Activated CD4-positive, alpha-beta memory T cell treated with anti-CD3 and anti-CD28 coated beads, Interleukin-2, amount 10 ng/mL, durations not matched to agents 7 days and 5 days (primary cell): ENCODE measurements at regions of chr16 and their contacts with region 1.

Region 1: GRCh38 chr16:84555418-84556195 is 51.1 kb upstream of the MEAK7 start:
- DNase-seq: no peak
- H3K4me3 Mint-ChIP-seq: no peak overlapping the region
- H3K27ac Mint-ChIP-seq: peak overlapping the region; percentile 41
- H3K4me1 Mint-ChIP-seq: peaks cover 43% of the 10 kb centered on the region
- H3K27me3 Mint-ChIP-seq: no peaks in the 10 kb centered on the region

Region 2: GRCh38 chr16:84423416-84423837 is 132.2 kb before region 1 on chr16:
- CTCF ChIA-PET with region 1: no interaction called
- POLR2A ChIA-PET with region 1: no interaction called
- DNase-seq: no peak
- H3K4me3 Mint-ChIP-seq: no peak overlapping the region
- H3K27ac Mint-ChIP-seq: no peak overlapping the region
- H3K4me1 Mint-ChIP-seq: peaks cover 9% of the 10 kb centered on the region
- H3K27me3 Mint-ChIP-seq: peaks cover 1% of the 10 kb centered on the region

Region 3: GRCh38 chr16:84511180-84511824 is 44.3 kb before region 1 on chr16:
- CTCF ChIA-PET with region 1: interaction called, 23 read pairs
- POLR2A ChIA-PET with region 1: interaction called, 49 read pairs
- DNase-seq: peak; percentile 79
- H3K4me3 Mint-ChIP-seq: no peak overlapping the region
- H3K27ac Mint-ChIP-seq: peak overlapping the region; percentile 99
- H3K4me1 Mint-ChIP-seq: peaks cover 81% of the 10 kb centered on the region
- H3K27me3 Mint-ChIP-seq: peaks cover 2% of the 10 kb centered on the region

Region 4: DNA sequence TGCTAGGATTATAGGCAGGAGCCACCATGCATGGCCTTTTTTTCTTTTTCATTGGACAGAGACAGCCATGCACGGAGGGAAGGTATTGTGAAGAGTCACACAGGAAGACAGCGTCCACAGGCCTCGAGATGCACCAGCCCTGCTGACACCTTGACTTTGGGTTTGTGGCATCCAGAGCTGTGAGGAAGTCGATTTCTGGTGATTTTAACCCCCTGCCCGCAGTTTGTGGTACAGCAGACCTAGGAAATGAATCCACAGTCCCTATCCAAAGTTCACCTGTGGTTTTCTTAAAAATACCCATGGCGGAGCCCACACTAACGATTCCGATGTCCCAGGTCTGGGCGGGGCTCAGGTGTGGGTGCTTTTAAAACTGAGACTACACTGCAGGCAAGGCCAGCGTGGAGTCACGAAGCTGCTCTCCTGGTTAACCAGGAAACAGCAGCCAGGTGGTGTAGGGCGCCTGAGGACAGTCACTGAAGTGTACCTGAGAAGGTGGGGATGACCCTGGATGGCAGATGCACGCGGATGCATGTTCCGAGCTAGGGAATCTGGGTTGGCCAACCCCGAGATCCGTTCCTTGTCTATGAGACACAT is 36.8 kb before region 1 on chr16:
- CTCF ChIA-PET with region 1: interaction called, 20 read pairs
- POLR2A ChIA-PET with region 1: interaction called, 62 read pairs
- DNase-seq: peak; percentile 89
- H3K4me3 Mint-ChIP-seq: peak overlapping the region; percentile 37
- H3K27ac Mint-ChIP-seq: peak overlapping the region; percentile 82
- H3K4me1 Mint-ChIP-seq: peaks cover 67% of the 10 kb centered on the region
- H3K27me3 Mint-ChIP-seq: no peaks in the 10 kb centered on the region

Region 5: DNA sequence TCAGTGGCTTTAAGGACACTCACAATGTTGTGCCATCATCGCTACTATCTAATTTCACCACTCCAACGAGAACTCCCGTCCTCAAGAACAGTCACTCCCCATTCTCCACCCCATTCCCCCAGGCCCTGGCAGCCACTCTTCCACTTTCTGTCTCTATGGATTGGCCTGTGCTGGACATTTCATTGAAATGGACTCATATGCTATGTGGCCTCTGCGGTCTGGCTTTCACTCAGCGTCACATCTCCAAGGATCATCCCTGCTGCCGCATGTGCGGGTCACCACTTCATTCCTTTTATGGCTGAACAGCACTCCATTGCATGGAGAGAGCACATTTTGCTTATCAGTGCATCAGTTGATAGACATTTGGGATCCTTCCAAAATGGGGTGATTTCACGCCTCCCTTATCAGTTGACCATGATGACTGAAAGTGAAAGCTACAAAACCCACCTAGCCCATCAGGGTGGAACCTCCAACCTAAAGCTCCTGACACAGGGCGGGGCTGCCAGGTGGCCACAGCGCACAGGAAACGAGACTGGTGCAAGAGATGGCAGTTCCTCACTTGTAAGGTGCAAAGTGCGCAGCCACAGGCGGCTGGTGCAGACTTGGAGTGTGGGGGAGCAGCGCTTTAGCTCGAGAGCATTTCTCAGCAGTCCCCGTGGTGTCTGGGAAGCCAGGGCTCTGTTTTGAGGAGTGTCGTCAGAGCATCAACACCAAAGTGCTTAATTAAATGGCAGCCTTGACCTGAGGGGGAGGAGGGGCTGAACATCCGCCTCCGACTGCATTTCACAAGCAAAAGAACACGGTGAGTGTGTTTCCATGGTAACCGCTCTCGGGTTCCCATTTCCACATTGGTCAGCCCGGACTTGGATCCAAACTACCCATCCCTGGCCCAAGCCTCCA is 38.5 kb after region 1 on chr16:
- CTCF ChIA-PET with region 1: interaction called, 12 read pairs
- POLR2A ChIA-PET with region 1: interaction called, 37 read pairs
- DNase-seq: peak; percentile 91
- H3K4me3 Mint-ChIP-seq: peak overlapping the region; percentile 81
- H3K27ac Mint-ChIP-seq: peak overlapping the region; percentile 96
- H3K4me1 Mint-ChIP-seq: peaks cover 82% of the 10 kb centered on the region
- H3K27me3 Mint-ChIP-seq: no peaks in the 10 kb centered on the region

Region 6: GRCh38 chr16:84599521-84600202 is 44.1 kb after region 1 on chr16:
- CTCF ChIA-PET with region 1: interaction called, 12 read pairs
- POLR2A ChIA-PET with region 1: interaction called, 37 read pairs
- DNase-seq: peak; percentile 59
- H3K4me3 Mint-ChIP-seq: peak overlapping the region; percentile 73
- H3K27ac Mint-ChIP-seq: peak overlapping the region; percentile 96
- H3K4me1 Mint-ChIP-seq: peaks cover 93% of the 10 kb centered on the region
- H3K27me3 Mint-ChIP-seq: no peaks in the 10 kb centered on the region

Region 7: DNA sequence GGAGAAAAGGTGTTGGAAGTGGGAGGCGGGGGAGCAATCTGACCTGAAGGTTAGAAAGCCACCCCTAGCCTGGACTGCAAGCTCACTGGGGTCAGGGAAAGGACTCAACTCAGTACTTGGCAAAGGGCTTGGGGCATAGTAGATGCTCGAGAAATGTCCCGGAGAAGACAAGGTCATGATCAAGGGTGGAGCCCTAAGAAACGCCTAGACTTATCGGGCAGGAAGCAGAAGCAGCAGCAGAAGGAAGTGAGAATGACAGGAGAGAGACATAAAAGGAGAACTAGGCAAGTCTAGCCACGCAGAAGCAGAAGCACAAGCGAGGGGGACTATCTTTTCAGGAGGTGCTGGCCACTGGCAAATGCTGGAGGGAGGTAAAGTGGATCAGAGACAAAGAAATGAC is 52.1 kb after region 1 on chr16:
- CTCF ChIA-PET with region 1: interaction called, 3 read pairs
- POLR2A ChIA-PET with region 1: interaction called, 43 read pairs
- DNase-seq: peak; percentile 51
- H3K4me3 Mint-ChIP-seq: peak overlapping the region; percentile 70
- H3K27ac Mint-ChIP-seq: peak overlapping the region; percentile 92
- H3K4me1 Mint-ChIP-seq: peaks cover 94% of the 10 kb centered on the region
- H3K27me3 Mint-ChIP-seq: no peaks in the 10 kb centered on the region

Region 8: DNA sequence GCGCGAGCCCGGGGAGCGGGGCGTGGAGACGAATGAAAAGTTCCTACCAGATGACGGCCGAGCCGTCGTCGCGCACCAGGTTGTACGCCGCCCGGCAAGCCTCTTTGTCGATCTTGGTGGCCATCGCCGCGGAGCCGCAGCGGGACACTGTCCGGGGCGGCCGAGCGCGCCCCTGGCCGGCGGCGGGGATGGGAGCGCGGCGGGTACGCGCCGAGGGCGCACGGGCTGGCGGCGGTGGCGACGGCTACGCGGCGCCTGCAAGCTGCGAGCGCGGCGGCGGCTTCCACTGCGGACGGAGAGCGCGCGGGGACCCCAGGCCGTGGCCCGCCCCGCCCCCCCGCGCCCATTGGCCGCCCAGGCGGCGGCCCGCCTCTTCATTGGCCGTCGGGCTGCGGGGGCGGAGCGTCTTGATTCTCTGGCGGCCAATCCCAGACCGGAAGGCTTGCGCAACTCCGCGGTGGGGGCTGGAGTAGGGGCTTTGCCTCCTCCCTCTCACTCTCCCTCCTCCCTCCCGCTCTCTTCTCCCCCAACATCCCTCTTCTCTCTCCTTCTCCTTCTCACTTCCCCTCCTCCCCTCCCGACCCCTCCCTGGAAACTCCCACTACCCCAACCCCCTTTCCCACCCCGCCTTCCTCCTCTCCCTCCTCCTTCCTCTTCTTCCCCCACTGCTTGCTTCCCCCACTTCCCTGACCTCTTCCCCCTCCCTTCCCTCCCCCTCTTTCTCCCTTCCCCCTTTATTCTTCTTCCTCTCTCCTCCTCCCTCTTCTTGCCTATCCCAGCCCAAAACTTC is 62.4 kb after region 1 on chr16 and contains the start of gene COTL1:
- CTCF ChIA-PET with region 1: interaction called, 15 read pairs
- POLR2A ChIA-PET with region 1: interaction called, 37 read pairs
- DNase-seq: peak; percentile 95
- H3K4me3 Mint-ChIP-seq: peak within 1 kb of the TSS; percentile 97
- H3K27ac Mint-ChIP-seq: peak within 1 kb of the TSS; percentile 76
- H3K4me1 Mint-ChIP-seq: peaks cover 57% of the 10 kb centered on the region
- H3K27me3 Mint-ChIP-seq: peaks cover 16% of the 10 kb centered on the region
- total RNA-seq, gene COTL1: 676 to 689 TPM